ENCODE measurements at regions of chr13 and their contacts with region 1.

Region 1: GRCh38 chr13:90696254-90696653 is 651.2 kb upstream of the MIR17HG start:
- DNase-seq: peak; percentile 74
- ATAC-seq: peak; percentile 84
- H3K4me3 ChIP-seq: peak overlapping the region; percentile 54; the same call in 1 of the 2 replicates
- H3K27ac ChIP-seq: peak overlapping the region; percentile 99
- H3K4me1 ChIP-seq: peaks cover 23% of the 10 kb centered on the region
- H3K27me3 ChIP-seq: no peaks in the 10 kb centered on the region
- CTCF ChIP-seq: no peak

Region 2: GRCh38 chr13:90455823-90456222 is 240.4 kb before region 1 on chr13:
- CTCF ChIA-PET with region 1: no interaction called
- POLR2A ChIA-PET with region 1: no interaction called
- intact Hi-C with region 1: loop called (anchors 5 kb)
- DNase-seq: peak; percentile 25
- ATAC-seq: peak; percentile 54
- H3K4me3 ChIP-seq: no peak overlapping the region
- H3K27ac ChIP-seq: no peak overlapping the region
- H3K4me1 ChIP-seq: peaks cover 6% of the 10 kb centered on the region
- H3K27me3 ChIP-seq: no peaks in the 10 kb centered on the region
- CTCF ChIP-seq: peak; percentile 32

Measured in PC-3 (cell line).